ENCODE measurements at regions of chr17 and their contacts with region 1.

Region 1: DNA sequence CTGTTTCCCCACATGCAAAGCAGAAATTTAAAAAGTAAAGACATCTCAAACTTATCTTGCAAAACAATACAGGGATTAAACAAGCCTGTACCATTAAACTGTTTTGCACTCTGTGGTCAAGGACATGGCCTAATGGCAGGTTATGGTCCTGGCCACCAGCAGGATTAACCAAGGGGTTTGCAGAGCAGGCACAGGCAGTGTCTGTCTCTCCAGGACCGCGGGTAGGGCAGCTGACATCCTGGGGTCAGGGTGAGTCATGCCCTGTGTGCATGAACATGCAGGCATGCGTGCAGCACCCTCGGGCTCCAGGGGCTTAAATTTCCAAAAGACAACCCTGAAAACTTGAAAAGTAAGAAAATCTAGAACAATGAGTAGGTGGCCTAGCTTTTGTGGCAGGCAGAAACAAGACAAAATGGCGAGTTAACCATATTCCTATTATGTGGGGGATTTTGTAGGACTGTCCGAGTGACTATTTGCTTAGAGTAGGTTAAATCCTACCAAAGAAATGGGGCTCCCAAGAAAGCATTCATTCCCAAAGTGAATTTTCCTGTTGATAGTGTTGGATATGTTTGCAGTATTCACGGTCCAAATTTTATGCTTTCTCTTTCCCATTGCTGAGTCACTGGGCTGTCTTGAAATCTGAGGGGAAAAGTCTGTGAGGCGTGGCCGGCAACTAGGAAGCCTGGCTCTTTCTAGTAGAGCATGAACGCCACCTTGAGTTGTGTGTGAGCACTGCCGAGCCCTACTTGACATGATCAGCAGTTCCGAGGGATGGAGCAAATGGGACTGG is 158.4 kb upstream of the FAM20A start:
- DNase-seq: peak; percentile 91
- ATAC-seq: peak; percentile 99
- H3K4me3 ChIP-seq: peak overlapping the region; percentile 60 to 67 (median 61)
- H3K27ac ChIP-seq: peak overlapping the region; percentile 92
- H3K4me1 ChIP-seq: peaks cover 35% of the 10 kb centered on the region
- H3K27me3 ChIP-seq: 0 out of 5 replicates have a peak, but pooled peaks cover 0 to 4% of the 10 kb centered on the region in 2 experiments
- CTCF ChIP-seq: peak; percentile 97
- EP300 ChIP-seq: peak in 1 of 2 experiments; percentile 58; a peak in 2 of 4 replicates
- POLR2A ChIP-seq: peak; percentile 63 to 90; a peak in 3 of 4 replicates
- RAD21 ChIP-seq: peak; percentile 97

Region 2: GRCh38 chr17:68291844-68292695 is 467.5 kb before region 1 on chr17:
- CTCF ChIA-PET with region 1: no interaction called
- POLR2A ChIA-PET with region 1: no interaction called
- in situ Hi-C with region 1: loop called (anchors 25 kb)
- intact Hi-C with region 1: no loop called
- DNase-seq: peak; percentile 77
- ATAC-seq: peak; percentile 86
- H3K4me3 ChIP-seq: peak overlapping the region; percentile 74 to 80 (median 79)
- H3K27ac ChIP-seq: peak overlapping the region; percentile 72
- H3K4me1 ChIP-seq: peaks cover 57% of the 10 kb centered on the region
- H3K27me3 ChIP-seq: peaks cover 0 to 3% of the 10 kb centered on the region in 2 experiments; a peak in 1 of 5 replicates
- CTCF ChIP-seq: peak; percentile 49
- EP300 ChIP-seq: 0 out of 4 replicates have a peak, but pooled peaks of 1 of the 2 experiments have one; percentile 4
- POLR2A ChIP-seq: peak in 1 of 2 experiments; percentile 34; a peak in 3 of 4 replicates
- RAD21 ChIP-seq: peak; percentile 60

Region 3: DNA sequence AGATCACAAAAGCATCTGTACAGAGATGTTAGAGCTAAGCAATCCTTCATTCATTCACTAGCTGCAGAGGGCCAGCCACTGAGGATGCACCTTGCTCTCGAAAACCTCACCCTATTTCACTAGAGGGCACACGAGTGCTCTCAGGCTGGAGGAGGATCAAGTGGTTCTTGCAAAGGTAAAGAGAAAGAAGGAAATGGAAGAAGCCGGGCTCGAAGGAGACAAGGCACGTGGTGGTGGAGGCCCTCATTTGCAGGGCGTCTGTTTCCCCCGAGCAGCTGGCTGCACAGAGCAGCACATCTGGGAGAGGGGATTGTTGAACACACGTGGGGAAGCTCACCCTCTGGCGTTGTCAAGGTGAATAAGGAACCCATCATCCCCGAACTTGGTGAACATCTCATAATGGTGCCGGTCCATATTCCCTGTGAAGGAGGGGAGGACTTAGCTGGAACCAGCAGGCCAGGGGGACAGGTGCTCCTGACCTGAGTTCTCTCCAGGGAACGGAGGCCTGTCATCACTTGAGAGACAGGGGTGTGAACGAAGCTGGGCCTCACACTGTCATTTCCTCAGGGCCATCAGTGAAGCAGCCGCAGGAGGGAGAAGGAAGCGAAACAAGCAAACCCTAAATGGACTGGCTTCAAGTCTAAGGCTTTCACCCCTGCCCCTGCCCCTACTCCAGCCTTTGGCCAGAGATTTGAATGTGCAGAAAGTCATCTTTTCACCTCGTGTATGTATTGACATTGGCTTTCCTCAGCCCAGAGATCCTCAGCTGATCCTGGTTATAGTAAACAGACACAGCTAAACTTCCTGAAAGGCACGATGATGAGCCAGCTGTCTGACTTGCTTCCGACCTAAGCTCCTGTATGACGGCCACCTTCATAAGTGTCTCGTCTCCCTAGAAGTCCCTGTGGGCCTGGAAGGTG is 219.7 kb before region 1 on chr17:
- CTCF ChIA-PET with region 1: interaction called, 4 read pairs
- POLR2A ChIA-PET with region 1: no interaction called
- in situ Hi-C with region 1: loop called (anchors 5 kb)
- intact Hi-C with region 1: no loop called
- DNase-seq: peak; percentile 24
- ATAC-seq: peak; percentile 4
- H3K4me3 ChIP-seq: no peak overlapping the region
- H3K27ac ChIP-seq: no peak overlapping the region
- H3K4me1 ChIP-seq: peaks cover 16% of the 10 kb centered on the region
- H3K27me3 ChIP-seq: no peaks in the 10 kb centered on the region
- CTCF ChIP-seq: peak; percentile 59
- EP300 ChIP-seq: no peak
- POLR2A ChIP-seq: 0 out of 4 replicates have a peak, but pooled peaks of 1 of the 2 experiments have one; percentile 15
- RAD21 ChIP-seq: no peak

Region 4: GRCh38 chr17:68613739-68614298 is 145.7 kb before region 1 on chr17:
- CTCF ChIA-PET with region 1: no interaction called
- POLR2A ChIA-PET with region 1: interaction called, 3 read pairs
- in situ Hi-C with region 1: loop called (anchors 5 kb)
- intact Hi-C with region 1: no loop called
- DNase-seq: peak; percentile 86
- ATAC-seq: peak; percentile 92
- H3K4me3 ChIP-seq: peak overlapping the region in 2 of 3 experiments; percentile 23 to 47; a peak in 2 of 6 replicates
- H3K27ac ChIP-seq: peak overlapping the region; percentile 37
- H3K4me1 ChIP-seq: peaks cover 35% of the 10 kb centered on the region
- H3K27me3 ChIP-seq: no peaks in the 10 kb centered on the region; a peak in 1 of 5 replicates
- CTCF ChIP-seq: peak; percentile 94
- EP300 ChIP-seq: no peak; a peak in 1 of 4 replicates
- POLR2A ChIP-seq: no peak
- RAD21 ChIP-seq: peak; percentile 85

Region 5: DNA sequence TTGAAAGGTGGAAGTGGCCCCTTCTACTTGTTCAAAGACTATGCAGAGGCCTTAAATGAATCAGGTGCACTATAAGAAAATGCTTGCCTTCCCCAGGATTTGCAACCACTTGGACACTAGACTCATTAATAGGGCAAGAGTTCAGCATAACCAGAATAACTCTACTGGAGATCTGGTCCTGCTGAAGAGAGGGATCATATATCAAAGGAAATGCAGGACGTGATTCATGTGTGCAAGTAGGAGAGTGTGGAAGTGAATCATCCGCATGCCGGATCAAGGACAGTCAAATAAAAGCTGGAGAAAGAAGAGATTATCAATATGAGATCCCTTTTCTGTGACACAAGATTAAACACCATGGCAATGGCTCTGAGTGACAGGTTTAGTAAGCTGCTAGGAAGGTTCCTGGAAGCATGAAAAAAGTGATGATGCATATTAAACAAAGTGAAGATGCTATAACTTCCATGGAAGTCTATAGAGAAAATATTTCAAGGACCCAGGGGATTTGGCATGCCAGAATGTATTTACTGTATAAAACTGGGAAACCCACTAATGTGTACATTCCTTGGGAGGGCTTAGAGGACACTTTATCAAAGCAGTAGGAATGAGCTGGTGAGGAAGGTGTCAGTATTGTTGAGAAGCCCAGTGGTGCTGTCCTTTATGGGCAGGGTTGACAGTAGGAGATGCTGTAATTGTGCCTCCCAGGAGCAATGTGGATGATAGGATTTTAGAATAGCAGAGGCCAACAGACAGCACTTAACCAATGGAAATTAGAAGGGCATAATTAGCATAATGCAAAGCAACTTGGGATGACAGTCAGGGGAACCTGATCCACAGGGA is 62.5 kb after region 1 on chr17:
- CTCF ChIA-PET with region 1: no interaction called
- POLR2A ChIA-PET with region 1: no interaction called
- in situ Hi-C with region 1: no loop called
- intact Hi-C with region 1: no loop called
- DNase-seq: peak; percentile 99
- ATAC-seq: peak; percentile 85
- H3K4me3 ChIP-seq: peak overlapping the region in 2 of 3 experiments; percentile 53 to 57; a peak in 3 of 6 replicates
- H3K27ac ChIP-seq: peak overlapping the region; percentile 91
- H3K4me1 ChIP-seq: peaks cover 79% of the 10 kb centered on the region
- H3K27me3 ChIP-seq: no peaks in the 10 kb centered on the region
- CTCF ChIP-seq: no peak
- EP300 ChIP-seq: peak; percentile 81 to 97; a peak in 3 of 4 replicates
- POLR2A ChIP-seq: no peak
- RAD21 ChIP-seq: no peak